Activated naive CD8-positive, alpha-beta T cell treated with anti-CD3 and anti-CD28 coated beads, Interleukin-2, amount 10 ng/mL, durations not matched to agents 7 days and 5 days (primary cell): ENCODE measurements at regions of chr19 and their contacts with region 1.

Region 1: GRCh38 chr19:19732579-19733501 is at the start of gene ZNF14:
- DNase-seq: peak; percentile 85
- ATAC-seq: peak; percentile 100
- H3K4me3 Mint-ChIP-seq: peak within 1 kb of the TSS; percentile 99
- H3K27ac Mint-ChIP-seq: peak within 1 kb of the TSS; percentile 97
- H3K4me1 Mint-ChIP-seq: peaks cover 16% of the 10 kb centered on the region
- H3K27me3 Mint-ChIP-seq: no peaks in the 10 kb centered on the region
- total RNA-seq, gene ZNF14: 13.7 to 16.9 TPM

Region 2: GRCh38 chr19:19776041-19777008 is 43.5 kb after region 1 on chr19:
- POLR2A ChIA-PET with region 1: interaction called, 17 read pairs
- DNase-seq: peak; percentile 90
- ATAC-seq: peak; percentile 99
- H3K4me3 Mint-ChIP-seq: peak overlapping the region; percentile 93
- H3K27ac Mint-ChIP-seq: peak overlapping the region; percentile 89
- H3K4me1 Mint-ChIP-seq: peaks cover 26% of the 10 kb centered on the region
- H3K27me3 Mint-ChIP-seq: no peaks in the 10 kb centered on the region

Region 3: GRCh38 chr19:19865739-19866481 is 133.1 kb after region 1 on chr19 and contains the start of gene ZNF253:
- POLR2A ChIA-PET with region 1: interaction called, 17 read pairs
- DNase-seq: peak; percentile 91
- ATAC-seq: peak; percentile 93
- H3K4me3 Mint-ChIP-seq: peak within 1 kb of the TSS; percentile 97
- H3K27ac Mint-ChIP-seq: peak within 1 kb of the TSS; percentile 98
- H3K4me1 Mint-ChIP-seq: peaks cover 13% of the 10 kb centered on the region
- H3K27me3 Mint-ChIP-seq: no peaks in the 10 kb centered on the region
- total RNA-seq, gene ZNF253: 25.6 to 32.4 TPM